Motor neuron (in vitro differentiated cells): ENCODE measurements at regions of chr17 and their contacts with region 1.

Region 1: DNA sequence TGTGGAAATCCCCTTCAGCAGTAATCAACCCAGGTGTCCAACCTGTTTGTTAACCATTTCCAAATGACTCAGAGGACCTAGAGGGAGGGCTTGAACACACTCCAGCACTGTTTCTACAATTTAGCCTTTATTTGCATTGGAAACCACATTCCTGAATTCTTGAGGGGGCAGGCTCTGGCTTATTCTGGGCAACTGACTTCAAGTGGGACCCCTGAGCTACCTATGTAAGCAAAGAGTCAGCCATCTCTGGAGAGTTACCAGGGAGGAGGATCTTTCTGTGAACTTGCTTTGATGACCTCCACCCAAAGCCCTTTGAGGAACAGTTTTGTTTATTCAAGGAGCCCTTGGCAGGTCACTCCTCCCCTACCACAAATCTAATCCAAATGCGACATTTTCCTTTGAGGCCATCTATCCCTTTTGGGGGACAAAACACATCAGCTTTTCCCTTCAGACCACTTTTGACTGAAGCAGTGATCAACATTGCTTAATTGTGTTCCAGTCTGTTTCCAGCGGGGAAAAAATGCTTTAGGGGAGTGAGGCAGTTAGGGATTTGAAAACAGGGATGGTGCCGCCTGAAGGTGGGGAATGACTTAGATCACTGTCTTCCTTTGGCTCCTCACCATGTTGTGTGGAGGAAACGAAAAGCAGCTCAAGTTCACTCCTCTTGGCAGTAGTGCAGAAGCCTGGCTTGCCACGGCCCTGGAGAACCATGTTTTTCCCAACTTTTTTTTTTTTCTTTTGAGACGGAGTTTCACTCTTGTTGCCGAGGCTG is 46.2 kb downstream of the TUBD1 start:
- ATAC-seq: peak in 5 of 8 experiments; percentile 0 to 24 (median 12)
- H3K4me3 ChIP-seq: no peak overlapping the region
- H3K27ac ChIP-seq: no peak overlapping the region
- H3K4me1 ChIP-seq: peaks cover 0 to 11% of the 10 kb centered on the region in 2 donors

Region 2: GRCh38 chr17:59753522-59754467 is 92.8 kb before region 1 on chr17:
- in situ Hi-C with region 1: loop called in 1 of 9 experiments (anchors 10 kb)
- ATAC-seq: peak; percentile 70 to 92 (median 82)
- H3K4me3 ChIP-seq: no peak overlapping the region
- H3K27ac ChIP-seq: no peak overlapping the region
- H3K4me1 ChIP-seq: peaks cover 0 to 4% of the 10 kb centered on the region in 2 donors

Region 3: GRCh38 chr17:59786536-59787319 is 59.9 kb before region 1 on chr17:
- in situ Hi-C with region 1: no loop called
- ATAC-seq: peak; percentile 87 to 97 (median 94)
- H3K4me3 ChIP-seq: no peak overlapping the region
- H3K27ac ChIP-seq: peak overlapping the region; percentile 42 to 72
- H3K4me1 ChIP-seq: peaks cover 24 to 31% of the 10 kb centered on the region in 2 donors

Region 4: DNA sequence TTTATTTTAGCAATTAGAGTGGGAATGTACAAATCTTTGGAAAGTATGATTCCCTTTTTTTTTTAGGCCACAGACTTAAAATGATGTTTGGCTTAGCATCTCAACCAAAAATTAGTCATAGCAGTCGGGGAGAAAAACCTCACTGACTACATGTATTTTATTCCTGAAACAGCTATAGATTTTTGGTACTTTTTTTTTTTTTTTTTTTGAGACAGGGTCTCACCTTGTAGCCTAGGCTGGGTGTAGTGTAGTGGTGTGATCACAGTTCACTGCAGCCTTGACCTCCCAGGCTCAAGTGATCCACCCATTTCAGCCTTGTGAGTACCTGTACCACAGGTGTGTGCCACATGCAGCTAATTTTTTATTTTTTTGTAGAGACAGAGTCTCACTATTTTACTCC is 94.6 kb after region 1 on chr17:
- in situ Hi-C with region 1: no loop called
- ATAC-seq: no peak
- H3K4me3 ChIP-seq: no peak overlapping the region
- H3K27ac ChIP-seq: no peak overlapping the region
- H3K4me1 ChIP-seq: no peaks in the 10 kb centered on the region